Gastrocnemius medialis (tissue), 4 donors: ENCODE measurements at regions of chr15 and their contacts with region 1.

Region 1: GRCh38 chr15:51649659-51650521 is 27.3 kb upstream of the DMXL2 start:
- DNase-seq: no peak
- ATAC-seq: peak; percentile 70 to 79
- H3K4me3 ChIP-seq: no peak overlapping the region
- H3K27ac ChIP-seq: no peak overlapping the region
- H3K4me1 ChIP-seq: no peaks in the 10 kb centered on the region
- H3K27me3 ChIP-seq: no peaks in the 10 kb centered on the region
- CTCF ChIP-seq: peak; percentile 48 to 75 (median 74)
- POLR2A ChIP-seq: no peak

Region 2: GRCh38 chr15:51536965-51537574 is 112.8 kb before region 1 on chr15:
- in situ Hi-C with region 1: loop called in 1 of 4 experiments (anchors 25 kb)
- intact Hi-C with region 1: no loop called
- DNase-seq: no peak
- ATAC-seq: no peak
- H3K4me3 ChIP-seq: no peak overlapping the region
- H3K27ac ChIP-seq: no peak overlapping the region
- H3K4me1 ChIP-seq: no peaks in the 10 kb centered on the region
- H3K27me3 ChIP-seq: no peaks in the 10 kb centered on the region
- CTCF ChIP-seq: peak in 1 of 5 experiments; percentile 20
- POLR2A ChIP-seq: no peak

Region 3: GRCh38 chr15:51771773-51772172 is 121.9 kb after region 1 on chr15:
- in situ Hi-C with region 1: loop called in 3 of 4 experiments (anchors 5 kb)
- intact Hi-C with region 1: no loop called
- DNase-seq: no peak
- ATAC-seq: no peak
- H3K4me3 ChIP-seq: no peak overlapping the region
- H3K27ac ChIP-seq: no peak overlapping the region
- H3K4me1 ChIP-seq: no peaks in the 10 kb centered on the region
- H3K27me3 ChIP-seq: no peaks in the 10 kb centered on the region
- CTCF ChIP-seq: no peak
- POLR2A ChIP-seq: no peak

Region 4: DNA sequence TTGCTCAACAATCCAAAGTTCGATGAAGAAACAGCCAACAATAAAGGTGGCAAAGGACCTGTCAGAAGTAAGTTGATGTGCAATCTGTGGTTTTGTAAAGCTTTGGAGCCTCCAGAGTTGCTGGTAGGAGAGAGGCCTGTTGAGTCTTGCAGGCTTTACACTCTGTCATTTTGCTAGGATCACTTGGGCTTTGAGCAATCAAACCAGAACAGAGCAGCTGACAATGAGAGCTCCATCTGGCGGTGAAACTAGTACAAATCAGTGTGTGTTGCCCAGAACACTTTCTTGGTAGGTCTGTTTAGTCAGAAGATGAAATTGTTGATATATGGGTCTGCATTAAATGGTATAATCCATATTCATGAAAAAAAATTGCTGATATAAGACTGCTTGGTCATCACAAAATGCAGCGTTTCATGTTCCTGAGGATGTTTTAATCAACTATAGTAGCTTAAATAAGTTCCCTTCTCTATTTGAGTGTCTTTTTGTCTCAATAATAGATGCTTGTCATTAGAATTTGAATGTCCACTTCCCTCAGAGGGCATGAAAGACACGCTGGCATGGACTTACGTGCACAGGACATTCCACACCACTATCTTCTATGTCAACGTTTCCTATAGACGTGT is 127.2 kb after region 1 on chr15:
- in situ Hi-C with region 1: loop called in 3 of 4 experiments (anchors 5 kb)
- intact Hi-C with region 1: loop called (anchors 1 kb)
- DNase-seq: peak; percentile 40 to 54
- ATAC-seq: peak; percentile 95 to 96
- H3K4me3 ChIP-seq: no peak overlapping the region
- H3K27ac ChIP-seq: no peak overlapping the region
- H3K4me1 ChIP-seq: no peaks in the 10 kb centered on the region
- H3K27me3 ChIP-seq: no peaks in the 10 kb centered on the region
- CTCF ChIP-seq: peak; percentile 54 to 75 (median 66)
- POLR2A ChIP-seq: no peak